CD4-positive, alpha-beta T cell (primary cell): ENCODE measurements at regions of chr21 and their contacts with region 1.

Region 1: DNA sequence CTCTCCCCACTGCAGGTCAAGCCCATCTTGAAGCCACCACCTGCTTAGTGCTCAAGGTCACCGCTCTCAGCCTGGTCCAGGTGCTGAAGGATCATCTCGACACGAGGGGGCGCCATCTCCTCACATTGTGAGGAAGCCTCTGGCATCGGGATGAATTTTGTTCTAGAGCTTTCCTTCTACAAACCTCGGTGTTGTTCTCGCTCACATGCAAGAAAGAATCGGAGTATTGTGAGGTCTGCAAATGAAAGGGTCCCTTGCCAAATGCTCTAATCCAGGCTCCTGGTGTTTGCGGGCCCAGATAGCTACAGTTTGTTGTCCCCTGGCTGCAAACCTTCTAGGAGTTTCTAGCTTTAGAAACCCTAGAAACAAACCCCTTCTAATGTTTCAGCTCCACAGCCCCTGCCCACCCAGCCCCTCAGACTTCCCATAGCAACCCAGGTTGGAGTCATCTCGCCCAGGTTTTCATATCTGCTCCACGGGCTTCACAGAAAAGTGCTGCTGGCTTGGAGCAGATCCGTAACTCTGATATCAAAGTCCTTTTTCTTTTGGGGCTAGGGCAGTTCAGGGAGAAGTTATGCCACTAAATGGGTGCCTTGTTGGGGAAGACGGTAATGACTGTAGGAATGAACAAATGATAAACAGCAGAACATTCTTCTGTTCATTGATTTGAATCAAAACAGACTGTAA is 8.6 kb upstream of the ATP5PO start:
- DNase-seq: peak; percentile 82 to 98 (median 91)
- ATAC-seq: peak; percentile 96
- H3K4me3 ChIP-seq: no peak overlapping the region
- H3K4me3 Mint-ChIP-seq: no peak overlapping the region
- H3K27ac ChIP-seq: no peak overlapping the region
- H3K27ac Mint-ChIP-seq: peak overlapping the region; percentile 61
- H3K4me1 ChIP-seq: peaks cover 11% of the 10 kb centered on the region
- H3K4me1 Mint-ChIP-seq: peaks cover 12% of the 10 kb centered on the region
- H3K27me3 ChIP-seq: no peaks in the 10 kb centered on the region
- H3K27me3 Mint-ChIP-seq: no peaks in the 10 kb centered on the region
- CTCF ChIP-seq: peak; percentile 88

Region 2: DNA sequence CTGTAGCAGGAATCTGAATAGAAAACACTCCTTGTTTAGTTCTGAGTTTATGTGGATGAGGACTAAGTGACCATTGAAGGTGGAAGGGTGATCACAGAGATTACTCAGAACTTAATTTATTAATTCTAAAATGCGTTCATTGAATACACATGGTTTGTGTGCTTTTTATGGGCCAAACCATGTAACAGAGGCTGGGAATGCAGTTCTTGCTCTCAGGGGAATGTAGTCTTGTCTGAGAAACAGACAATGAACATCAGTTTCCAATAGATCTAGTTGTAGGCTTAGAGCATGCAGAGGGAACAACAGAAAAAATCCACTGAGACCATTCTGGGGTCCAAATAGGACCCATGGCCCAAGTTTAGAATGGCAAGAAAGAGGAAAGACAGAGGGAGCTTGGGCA is 235.9 kb before region 1 on chr21:
- CTCF ChIA-PET with region 1: no interaction called
- POLR2A ChIA-PET with region 1: no interaction called
- intact Hi-C with region 1: no loop called
- DNase-seq: no peak
- ATAC-seq: no peak
- H3K4me3 ChIP-seq: no peak overlapping the region
- H3K4me3 Mint-ChIP-seq: no peak overlapping the region
- H3K27ac ChIP-seq: no peak overlapping the region
- H3K27ac Mint-ChIP-seq: no peak overlapping the region
- H3K4me1 ChIP-seq: no peaks in the 10 kb centered on the region
- H3K4me1 Mint-ChIP-seq: no peaks in the 10 kb centered on the region
- H3K27me3 ChIP-seq: no peaks in the 10 kb centered on the region
- H3K27me3 Mint-ChIP-seq: no peaks in the 10 kb centered on the region
- CTCF ChIP-seq: no peak

Region 3: GRCh38 chr21:33976082-33977016 is 52.1 kb after region 1 on chr21:
- CTCF ChIA-PET with region 1: interaction called, 20 read pairs
- POLR2A ChIA-PET with region 1: interaction called, 4 read pairs
- intact Hi-C with region 1: loop called in 1 of 2 experiments (anchors 5 kb)
- DNase-seq: peak; percentile 19 to 80 (median 54)
- ATAC-seq: peak; percentile 75
- H3K4me3 ChIP-seq: peak overlapping the region; percentile 15
- H3K4me3 Mint-ChIP-seq: peak overlapping the region; percentile 49
- H3K27ac ChIP-seq: peak overlapping the region; percentile 65 to 71
- H3K27ac Mint-ChIP-seq: peak overlapping the region; percentile 88
- H3K4me1 ChIP-seq: peaks cover 34% of the 10 kb centered on the region
- H3K4me1 Mint-ChIP-seq: peaks cover 50% of the 10 kb centered on the region
- H3K27me3 ChIP-seq: no peaks in the 10 kb centered on the region
- H3K27me3 Mint-ChIP-seq: no peaks in the 10 kb centered on the region
- CTCF ChIP-seq: no peak

Region 4: GRCh38 chr21:34091607-34092006 is 167.4 kb after region 1 on chr21:
- CTCF ChIA-PET with region 1: interaction called, 20 read pairs
- POLR2A ChIA-PET with region 1: no interaction called
- intact Hi-C with region 1: no loop called
- DNase-seq: peak in 1 of 14 experiments; percentile 22
- ATAC-seq: no peak
- H3K4me3 ChIP-seq: no peak overlapping the region
- H3K4me3 Mint-ChIP-seq: peak overlapping the region; percentile 2
- H3K27ac ChIP-seq: no peak overlapping the region
- H3K27ac Mint-ChIP-seq: peak overlapping the region; percentile 33
- H3K4me1 ChIP-seq: peaks cover 14% of the 10 kb centered on the region
- H3K4me1 Mint-ChIP-seq: peaks cover 66% of the 10 kb centered on the region
- H3K27me3 ChIP-seq: no peaks in the 10 kb centered on the region
- H3K27me3 Mint-ChIP-seq: no peaks in the 10 kb centered on the region
- CTCF ChIP-seq: peak; percentile 34

Region 5: DNA sequence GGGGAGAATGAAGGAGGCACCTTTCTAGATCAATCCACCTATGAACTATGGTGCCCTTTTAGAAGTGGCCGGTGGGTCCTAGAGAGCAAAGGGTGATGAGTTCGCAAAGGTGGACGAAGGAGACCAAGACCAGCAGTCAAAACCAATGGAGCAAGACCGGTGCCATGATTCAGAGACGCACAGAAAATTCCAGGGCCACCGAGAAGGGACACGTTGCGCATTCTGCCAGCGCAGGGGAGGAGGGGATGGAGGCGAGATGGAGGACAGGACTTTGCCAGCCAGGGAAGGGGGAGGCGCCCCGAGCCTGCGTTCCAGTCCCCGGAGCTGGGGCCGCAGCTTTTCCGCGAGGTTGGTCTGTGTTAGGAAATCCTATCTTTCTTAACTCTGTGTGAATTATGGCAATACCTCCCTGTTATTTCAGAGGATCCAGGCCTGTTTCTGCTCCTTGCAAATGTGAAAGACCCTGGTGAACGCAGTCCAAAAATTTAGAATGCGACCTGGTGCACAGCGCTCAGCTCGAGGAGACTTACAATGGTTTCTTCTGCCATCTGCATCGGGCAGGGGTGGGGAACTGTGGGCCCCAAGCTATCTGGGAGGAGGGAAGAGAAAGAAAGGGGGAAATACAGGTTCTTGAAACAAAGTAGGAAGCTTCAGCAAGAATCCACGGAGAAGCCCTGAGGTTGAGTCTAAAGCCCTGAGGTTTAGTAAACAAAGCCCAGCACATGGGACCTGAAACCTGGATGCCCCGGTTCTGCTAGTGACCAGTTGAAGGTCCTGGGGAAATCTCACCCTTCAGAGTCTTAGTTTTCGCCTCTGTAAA is 278.5 kb after region 1 on chr21:
- CTCF ChIA-PET with region 1: interaction called, 29 read pairs
- POLR2A ChIA-PET with region 1: interaction called, 14 read pairs
- intact Hi-C with region 1: loop called (anchors 2 to 10 kb)
- DNase-seq: peak in 3 of 14 experiments; percentile 7 to 33 (median 32)
- ATAC-seq: peak; percentile 21
- H3K4me3 ChIP-seq: peak overlapping the region; percentile 54
- H3K4me3 Mint-ChIP-seq: peak overlapping the region; percentile 84
- H3K27ac ChIP-seq: no peak overlapping the region
- H3K27ac Mint-ChIP-seq: peak overlapping the region; percentile 48
- H3K4me1 ChIP-seq: peaks cover 49% of the 10 kb centered on the region
- H3K4me1 Mint-ChIP-seq: peaks cover 52% of the 10 kb centered on the region
- H3K27me3 ChIP-seq: no peaks in the 10 kb centered on the region
- H3K27me3 Mint-ChIP-seq: no peaks in the 10 kb centered on the region
- CTCF ChIP-seq: no peak

Region 6: DNA sequence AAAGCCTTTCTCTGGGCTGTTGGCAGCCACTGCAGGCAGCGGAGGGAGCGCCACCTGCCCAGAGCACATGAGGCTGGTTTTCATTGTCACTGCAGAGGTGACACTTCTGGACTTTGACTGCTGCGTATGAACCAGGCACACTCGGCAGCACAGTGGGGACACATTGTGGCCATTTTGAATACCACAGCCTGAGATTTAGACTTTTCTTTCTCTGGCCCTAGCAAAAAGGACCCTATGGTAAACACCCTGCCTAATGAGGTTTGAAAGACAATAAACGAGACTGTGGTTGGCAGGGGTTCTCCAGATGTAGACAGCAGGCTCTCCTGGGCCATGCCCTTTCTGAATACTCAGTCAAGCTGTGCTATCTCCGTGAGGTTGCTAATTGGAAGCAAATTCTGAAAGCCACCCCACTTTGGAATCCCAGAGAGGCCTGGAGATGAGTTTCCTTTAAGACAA is 427.6 kb after region 1 on chr21:
- CTCF ChIA-PET with region 1: interaction called, 92 read pairs
- POLR2A ChIA-PET with region 1: interaction called, 53 read pairs
- intact Hi-C with region 1: loop called (anchors 1 kb)
- DNase-seq: peak in 7 of 14 experiments; percentile 2 to 49 (median 9)
- ATAC-seq: peak; percentile 53
- H3K4me3 ChIP-seq: no peak overlapping the region
- H3K4me3 Mint-ChIP-seq: no peak overlapping the region
- H3K27ac ChIP-seq: no peak overlapping the region
- H3K27ac Mint-ChIP-seq: no peak overlapping the region
- H3K4me1 ChIP-seq: peaks cover 4% of the 10 kb centered on the region
- H3K4me1 Mint-ChIP-seq: peaks cover 10% of the 10 kb centered on the region
- H3K27me3 ChIP-seq: peaks cover 0 to 2% of the 10 kb centered on the region in 2 experiments
- H3K27me3 Mint-ChIP-seq: peaks cover 7% of the 10 kb centered on the region
- CTCF ChIP-seq: no peak